ENCODE measurements at regions of chr10 and their contacts with region 1.

Region 1: DNA sequence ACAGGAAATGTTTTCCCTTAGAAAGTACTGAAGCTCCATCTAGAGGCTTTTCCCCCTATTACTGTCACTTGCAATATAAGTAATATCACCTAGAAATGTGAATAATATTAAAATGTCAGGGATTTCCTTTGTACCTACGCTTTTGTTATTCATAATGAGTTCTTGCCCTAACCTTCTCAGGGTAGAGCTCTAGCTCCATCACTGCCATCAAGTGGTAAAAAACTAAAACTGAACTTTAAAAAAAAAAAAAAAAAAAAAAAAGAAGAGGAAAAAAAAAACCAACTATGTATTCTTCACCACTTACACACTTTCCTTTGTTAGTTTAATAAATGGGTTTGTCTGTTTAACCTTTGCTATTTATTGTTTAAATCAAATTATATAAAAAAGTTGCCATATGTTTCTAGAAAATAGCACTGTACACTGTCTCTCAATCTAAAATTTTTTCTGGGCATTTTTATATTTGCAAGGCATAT is 49.9 kb downstream of the DNAJC1 start:
- DNase-seq: no peak
- ATAC-seq: peak in 1 of 2 donors; percentile 36
- H3K4me3 ChIP-seq: no peak overlapping the region
- H3K27ac ChIP-seq: no peak overlapping the region
- H3K4me1 ChIP-seq: no peaks in the 10 kb centered on the region
- H3K27me3 ChIP-seq: no peaks in the 10 kb centered on the region

Region 2: GRCh38 chr10:21278491-21279239 is 675.0 kb before region 1 on chr10:
- intact Hi-C with region 1: loop called in 2 of 4 experiments (anchors 5 to 10 kb)
- DNase-seq: peak; percentile 96 to 99 (median 96)
- ATAC-seq: peak; percentile 97 to 98
- H3K4me3 ChIP-seq: no peak overlapping the region
- H3K27ac ChIP-seq: no peak overlapping the region
- H3K4me1 ChIP-seq: no peaks in the 10 kb centered on the region
- H3K27me3 ChIP-seq: no peaks in the 10 kb centered on the region

Region 3: GRCh38 chr10:21285742-21286331 is 667.8 kb before region 1 on chr10:
- intact Hi-C with region 1: loop called in 1 of 4 experiments (anchors 10 kb)
- DNase-seq: no peak
- ATAC-seq: no peak
- H3K4me3 ChIP-seq: no peak overlapping the region
- H3K27ac ChIP-seq: no peak overlapping the region
- H3K4me1 ChIP-seq: no peaks in the 10 kb centered on the region
- H3K27me3 ChIP-seq: no peaks in the 10 kb centered on the region